ENCODE measurements at regions of chr17 and their contacts with region 1.

Region 1: DNA sequence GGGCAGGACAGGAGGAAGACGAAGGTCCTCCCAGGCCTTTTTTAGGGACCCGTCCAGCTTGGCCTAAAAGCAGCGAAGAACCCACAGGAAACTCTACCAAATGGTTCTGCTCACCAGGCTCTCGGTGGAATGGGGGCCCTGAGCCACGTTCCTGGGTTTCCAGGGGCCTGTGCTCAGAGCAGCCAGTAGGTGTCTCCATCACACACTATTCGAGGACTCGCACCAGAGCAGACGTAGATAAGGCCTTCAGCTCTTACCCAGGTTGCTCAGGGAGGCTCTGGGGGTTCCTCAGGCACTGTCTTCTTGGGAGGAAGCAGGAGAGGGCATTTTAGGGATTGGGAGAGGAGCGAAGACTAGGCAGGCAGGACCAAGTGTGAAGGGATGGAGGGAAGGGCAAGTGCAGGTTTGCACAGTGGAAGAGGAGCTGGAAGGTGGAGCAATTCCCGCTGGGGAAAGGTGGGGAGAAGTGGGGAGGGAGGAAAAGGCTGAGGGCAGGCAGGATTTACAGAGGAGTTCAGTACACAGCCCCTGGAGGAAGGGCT is 157.1 kb downstream of the RGS9 start:
- DNase-seq: peak; percentile 75
- H3K4me3 ChIP-seq: no peak overlapping the region
- H3K27ac ChIP-seq: peak overlapping the region; percentile 52 to 81 (median 66)
- H3K4me1 ChIP-seq: peaks cover 4 to 39% (median 20%) of the 10 kb centered on the region in 4 donors
- H3K27me3 ChIP-seq: no peaks in the 10 kb centered on the region
- CTCF ChIP-seq: peak; percentile 64 to 88 (median 74)
- EP300 ChIP-seq: no peak
- POLR2A ChIP-seq: no peak

Region 2: DNA sequence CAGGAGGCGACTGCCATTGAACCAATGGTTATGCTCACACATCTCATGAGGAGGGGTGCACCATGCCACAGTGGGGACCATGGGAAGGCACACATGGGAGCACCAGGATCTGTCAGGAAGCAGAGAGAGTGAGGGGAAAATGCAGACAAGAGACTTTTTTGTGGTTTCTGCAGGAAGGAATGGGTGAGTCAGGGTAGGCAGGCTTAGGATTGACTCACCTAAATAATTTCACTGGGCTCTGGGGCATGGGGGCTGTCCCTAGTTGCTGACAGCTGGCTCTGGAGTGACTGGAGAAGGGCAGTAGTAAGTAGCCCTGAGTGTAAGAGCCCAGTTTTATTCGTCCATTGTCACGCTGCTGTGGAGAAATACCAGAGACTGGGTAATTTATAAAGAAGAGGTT is 64.8 kb after region 1 on chr17:
- in situ Hi-C with region 1: no loop called
- intact Hi-C with region 1: no loop called
- DNase-seq: no peak
- H3K4me3 ChIP-seq: no peak overlapping the region
- H3K27ac ChIP-seq: no peak overlapping the region
- H3K4me1 ChIP-seq: peaks cover 0 to 12% (median 2%) of the 10 kb centered on the region in 4 donors
- H3K27me3 ChIP-seq: no peaks in the 10 kb centered on the region
- CTCF ChIP-seq: no peak
- EP300 ChIP-seq: no peak
- POLR2A ChIP-seq: no peak

Region 3: GRCh38 chr17:65556014-65556909 is 262.0 kb after region 1 on chr17:
- in situ Hi-C with region 1: loop called (anchors 10 to 25 kb)
- intact Hi-C with region 1: no loop called
- DNase-seq: peak; percentile 94
- H3K4me3 ChIP-seq: peak overlapping the region in 3 of 4 donors; percentile 1 to 92 (median 10)
- H3K27ac ChIP-seq: no peak overlapping the region
- H3K4me1 ChIP-seq: peaks cover 4 to 45% (median 22%) of the 10 kb centered on the region in 4 donors
- H3K27me3 ChIP-seq: no peaks in the 10 kb centered on the region
- CTCF ChIP-seq: peak; percentile 81 to 95 (median 90)
- EP300 ChIP-seq: no peak
- POLR2A ChIP-seq: no peak

Region 4: DNA sequence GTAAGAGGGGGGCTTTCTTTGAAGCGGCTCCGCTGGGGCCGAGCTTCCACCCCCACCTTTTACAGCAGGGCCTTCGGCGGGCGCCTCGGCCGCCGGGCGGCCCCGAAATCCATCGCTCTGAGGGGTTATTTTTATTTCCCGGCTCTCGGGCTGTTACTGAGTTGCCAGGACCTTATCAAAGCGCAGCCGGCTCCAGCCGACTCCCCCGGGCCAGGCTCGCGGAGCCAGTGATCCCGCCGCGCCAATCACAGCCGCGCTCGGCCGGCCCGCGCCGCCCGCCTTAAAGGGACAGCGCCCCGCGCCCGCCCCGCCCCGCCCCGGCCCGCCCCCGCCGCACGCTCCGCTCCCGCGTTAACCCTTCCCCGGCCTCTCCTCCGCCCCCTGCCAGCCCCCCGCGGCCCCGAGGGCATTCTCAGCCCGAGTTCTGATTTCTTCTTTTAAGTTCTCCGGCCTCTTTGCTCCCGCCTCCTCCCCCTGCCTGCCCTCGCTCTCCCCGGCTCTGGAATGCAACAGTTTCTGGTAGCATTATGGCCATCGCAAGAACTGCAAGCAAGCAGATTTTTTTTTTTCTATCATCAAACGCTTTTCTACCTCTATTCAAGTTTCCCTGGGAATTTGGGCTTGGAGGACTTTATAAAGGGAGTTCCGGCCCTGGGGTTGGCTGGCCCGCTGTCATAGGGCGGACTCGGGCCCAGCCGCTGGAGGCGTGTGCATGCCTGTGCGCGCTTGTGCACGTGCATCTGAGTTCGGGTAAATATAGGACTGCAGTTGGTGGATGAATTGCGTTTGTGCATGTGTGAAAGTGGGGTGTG is 267.4 kb after region 1 on chr17 and contains the start of gene AXIN2:
- in situ Hi-C with region 1: loop called (anchors 10 to 25 kb)
- intact Hi-C with region 1: no loop called
- DNase-seq: peak; percentile 92
- H3K4me3 ChIP-seq: peak within 1 kb of the TSS; percentile 78 to 99 (median 89)
- H3K27ac ChIP-seq: no peak within 1 kb of the TSS
- H3K4me1 ChIP-seq: peaks cover 10 to 38% (median 16%) of the 10 kb centered on the region in 4 donors
- H3K27me3 ChIP-seq: no peaks in the 10 kb centered on the region
- CTCF ChIP-seq: peak; percentile 13 to 85 (median 39)
- EP300 ChIP-seq: no peak
- POLR2A ChIP-seq: no peak
- total RNA-seq, gene AXIN2: 17.6 to 87.6 (median 23.8) TPM

Region 5: GRCh38 chr17:65794572-65794971 is 500.3 kb after region 1 on chr17:
- in situ Hi-C with region 1: loop called in 3 of 4 experiments (anchors 25 kb)
- intact Hi-C with region 1: no loop called
- DNase-seq: no peak
- H3K4me3 ChIP-seq: no peak overlapping the region
- H3K27ac ChIP-seq: no peak overlapping the region
- H3K4me1 ChIP-seq: no peaks in the 10 kb centered on the region
- H3K27me3 ChIP-seq: no peaks in the 10 kb centered on the region
- CTCF ChIP-seq: peak; percentile 30 to 64 (median 53)
- EP300 ChIP-seq: no peak
- POLR2A ChIP-seq: no peak

Region 6: GRCh38 chr17:66165513-66166123 is 871.4 kb after region 1 on chr17:
- in situ Hi-C with region 1: loop called in 2 of 4 experiments (anchors 10 to 25 kb)
- intact Hi-C with region 1: loop called (anchors 5 kb)
- DNase-seq: no peak
- H3K4me3 ChIP-seq: no peak overlapping the region
- H3K27ac ChIP-seq: no peak overlapping the region
- H3K4me1 ChIP-seq: no peaks in the 10 kb centered on the region
- H3K27me3 ChIP-seq: no peaks in the 10 kb centered on the region
- CTCF ChIP-seq: peak; percentile 64 to 83 (median 72)
- EP300 ChIP-seq: no peak
- POLR2A ChIP-seq: no peak

Measured in transverse colon (tissue), 4 donors.